Mammary epithelial cell (primary cell): ENCODE measurements at regions of chr15 and their contacts with region 1.

Region 1: GRCh38 chr15:89206908-89207331 is 14.5 kb downstream of the RLBP1 start:
- DNase-seq: peak; percentile 48
- H3K4me3 ChIP-seq: peak overlapping the region in 2 of 3 experiments; percentile 17 to 24
- H3K27ac ChIP-seq: no peak overlapping the region
- H3K4me1 ChIP-seq: no peaks in the 10 kb centered on the region
- H3K27me3 ChIP-seq: no peaks in the 10 kb centered on the region
- CTCF ChIP-seq: peak; percentile 95 to 98

Region 2: DNA sequence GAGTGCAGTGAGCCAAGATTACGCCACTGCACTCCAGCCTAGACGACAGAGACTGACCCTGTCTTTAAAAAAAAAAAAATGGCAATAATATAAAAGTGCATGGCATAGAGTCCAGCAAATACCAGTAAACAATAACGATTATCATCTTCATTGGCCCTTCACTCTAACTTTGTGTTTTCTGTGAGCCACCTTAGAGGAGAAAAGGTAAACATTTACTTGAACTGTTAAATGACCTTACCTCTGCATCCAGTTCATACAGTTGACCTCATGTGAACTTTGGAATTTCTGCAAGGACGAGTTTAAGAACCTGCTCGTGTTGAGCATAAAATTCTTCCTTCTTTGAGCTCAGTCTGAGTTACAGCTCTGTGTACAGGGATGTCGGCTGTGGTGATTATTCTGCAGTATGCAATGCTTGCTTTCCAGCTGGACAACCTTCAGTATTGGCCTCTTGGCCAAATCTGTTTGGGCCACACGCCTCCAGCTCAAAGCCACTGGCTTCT is 42.2 kb before region 1 on chr15:
- CTCF ChIA-PET with region 1: no interaction called
- dilution Hi-C with region 1: no loop called
- in situ Hi-C with region 1: no loop called
- intact Hi-C with region 1: no loop called
- DNase-seq: no peak
- H3K4me3 ChIP-seq: no peak overlapping the region
- H3K27ac ChIP-seq: no peak overlapping the region
- H3K4me1 ChIP-seq: peaks cover 37% of the 10 kb centered on the region
- H3K27me3 ChIP-seq: no peaks in the 10 kb centered on the region
- CTCF ChIP-seq: no peak

Region 3: DNA sequence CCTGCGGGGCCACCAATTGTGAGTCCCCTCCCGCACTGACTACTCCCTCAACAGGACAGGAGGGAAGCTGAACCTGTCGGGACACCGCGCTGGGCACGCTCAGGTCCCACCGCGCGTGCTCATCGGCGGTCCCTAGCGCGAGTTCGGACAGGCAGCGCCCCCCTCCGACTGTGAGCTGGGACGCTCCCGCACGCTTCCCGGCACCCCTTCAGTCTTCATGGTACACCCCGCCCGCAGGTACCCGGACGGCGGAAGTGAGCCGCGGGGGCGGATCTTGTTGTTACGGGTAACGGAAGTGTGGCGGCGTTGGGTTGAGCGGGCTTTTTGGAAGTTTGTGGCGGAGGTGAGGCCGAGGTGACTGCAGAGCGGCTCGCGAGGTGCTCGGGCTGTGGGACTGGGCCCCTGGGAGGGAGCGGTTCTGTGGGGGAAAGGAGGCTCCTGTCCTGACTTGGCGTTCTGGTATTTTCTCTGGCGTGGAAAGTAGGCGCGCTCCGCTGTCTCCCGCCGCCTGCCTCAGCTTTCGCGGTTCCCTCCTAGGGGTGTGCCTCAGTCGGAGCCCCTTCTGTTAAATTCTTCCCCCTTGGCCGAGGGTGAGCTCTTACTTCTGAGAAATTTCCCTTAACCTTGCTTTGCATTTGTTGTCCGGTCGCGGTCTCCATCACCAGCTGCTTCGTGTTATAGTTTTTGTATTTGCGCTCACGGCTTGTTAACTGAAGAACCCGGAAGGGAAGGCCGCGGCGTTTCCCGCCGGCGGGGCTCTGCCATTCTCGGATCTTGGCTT is 37.0 kb after region 1 on chr15 and contains the start of gene FANCI:
- CTCF ChIA-PET with region 1: interaction called, 3 read pairs
- dilution Hi-C with region 1: no loop called
- in situ Hi-C with region 1: no loop called
- intact Hi-C with region 1: loop called (anchors 1 kb)
- DNase-seq: peak; percentile 94
- H3K4me3 ChIP-seq: peak within 1 kb of the TSS; percentile 79 to 93 (median 85)
- H3K27ac ChIP-seq: peak within 1 kb of the TSS; percentile 73
- H3K4me1 ChIP-seq: peaks cover 14% of the 10 kb centered on the region
- H3K27me3 ChIP-seq: no peaks in the 10 kb centered on the region
- CTCF ChIP-seq: peak in 1 of 2 donors; percentile 61
- total RNA-seq, gene FANCI: 17.3 to 65.8 TPM

Region 4: GRCh38 chr15:89299896-89300295 is 93.0 kb after region 1 on chr15:
- CTCF ChIA-PET with region 1: interaction called, 8 read pairs
- dilution Hi-C with region 1: no loop called
- in situ Hi-C with region 1: no loop called
- intact Hi-C with region 1: loop called (anchors 1 kb)
- DNase-seq: no peak
- H3K4me3 ChIP-seq: no peak overlapping the region
- H3K27ac ChIP-seq: no peak overlapping the region
- H3K4me1 ChIP-seq: no peaks in the 10 kb centered on the region
- H3K27me3 ChIP-seq: no peaks in the 10 kb centered on the region
- CTCF ChIP-seq: peak; percentile 9 to 35

Region 5: DNA sequence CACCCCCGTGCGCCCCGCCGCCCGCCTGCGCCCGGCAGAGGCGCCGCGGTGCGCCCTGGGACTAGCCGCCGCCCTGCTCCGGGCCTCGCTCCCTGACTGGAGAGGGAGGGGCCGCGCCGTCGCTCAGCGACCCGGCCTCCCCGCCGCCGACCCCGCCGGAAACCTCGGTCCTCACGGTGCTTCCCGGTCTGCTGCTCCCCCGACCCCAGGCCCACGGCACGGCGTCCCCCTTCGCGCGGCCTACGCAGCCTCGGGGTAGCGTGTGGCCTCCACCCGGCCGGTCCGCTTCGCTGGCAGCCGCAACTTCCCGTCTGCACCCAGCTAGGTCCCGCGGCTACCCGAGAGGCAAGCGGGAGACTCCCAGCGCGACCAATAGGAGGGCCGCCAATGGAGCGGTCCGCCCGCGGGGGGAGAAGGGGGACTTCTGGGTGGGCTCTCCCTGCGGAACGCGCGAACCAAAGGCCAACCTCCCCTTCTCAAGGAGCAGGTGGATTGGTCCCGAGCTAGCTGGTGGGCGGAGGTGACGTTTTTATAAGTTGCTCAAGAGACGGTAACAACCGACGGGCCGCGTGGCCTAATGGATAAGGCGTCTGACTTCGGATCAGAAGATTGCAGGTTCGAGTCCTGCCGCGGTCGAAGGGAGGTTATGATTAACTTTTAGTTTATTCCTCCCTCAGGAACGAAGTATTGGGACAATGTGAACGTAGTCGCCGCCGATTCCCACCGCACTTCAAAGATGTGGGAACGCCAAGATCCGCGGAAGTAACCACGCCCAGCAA is 127.8 kb after region 1 on chr15 and contains the start of gene POLG:
- CTCF ChIA-PET with region 1: no interaction called
- dilution Hi-C with region 1: no loop called
- in situ Hi-C with region 1: no loop called
- intact Hi-C with region 1: loop called (anchors 10 kb)
- DNase-seq: peak; percentile 99
- H3K4me3 ChIP-seq: peak within 1 kb of the TSS; percentile 57 to 86 (median 70)
- H3K27ac ChIP-seq: peak within 1 kb of the TSS; percentile 74
- H3K4me1 ChIP-seq: peaks cover 38% of the 10 kb centered on the region
- H3K27me3 ChIP-seq: no peaks in the 10 kb centered on the region
- CTCF ChIP-seq: no peak
- total RNA-seq, gene POLG: 58.3 to 66.7 TPM

Region 6: DNA sequence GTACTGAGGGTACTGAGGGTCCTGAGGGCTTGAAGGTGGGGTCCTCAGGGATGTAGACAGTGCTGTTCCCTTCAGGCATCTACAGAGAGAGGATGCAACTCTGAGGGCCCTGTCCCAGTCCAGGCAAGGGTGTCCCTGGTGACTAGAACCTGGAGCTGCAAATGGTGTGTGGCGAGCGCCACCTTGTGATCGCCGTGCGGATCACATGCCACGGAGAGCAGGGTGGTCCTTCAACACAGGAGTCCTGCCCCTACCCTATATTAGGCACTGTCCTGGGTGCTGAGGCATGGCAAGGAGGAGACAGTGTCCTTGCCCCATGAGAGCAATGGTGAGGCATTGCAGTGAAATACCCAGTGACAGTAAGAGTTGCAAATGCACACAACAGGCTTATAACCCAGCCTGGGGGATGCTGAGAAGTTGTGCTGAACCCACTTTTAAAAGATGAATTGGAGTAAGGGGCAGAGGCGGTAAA is 265.9 kb after region 1 on chr15:
- CTCF ChIA-PET with region 1: no interaction called
- dilution Hi-C with region 1: no loop called
- in situ Hi-C with region 1: no loop called
- intact Hi-C with region 1: loop called (anchors 2 kb)
- DNase-seq: peak; percentile 37
- H3K4me3 ChIP-seq: no peak overlapping the region
- H3K27ac ChIP-seq: no peak overlapping the region
- H3K4me1 ChIP-seq: peaks cover 8% of the 10 kb centered on the region
- H3K27me3 ChIP-seq: peaks cover 4% of the 10 kb centered on the region
- CTCF ChIP-seq: peak; percentile 80 to 92